HepG2 (cell line): ENCODE measurements at regions of chr19 and their contacts with region 1.

Region 1: GRCh38 chr19:2750808-2751443 is 11.1 kb upstream of the SLC39A3 start:
- DNase-seq: no peak
- ATAC-seq: no peak
- H3K4me3 ChIP-seq: no peak overlapping the region
- H3K27ac ChIP-seq: no peak overlapping the region
- H3K4me1 ChIP-seq: no peaks in the 10 kb centered on the region
- H3K27me3 ChIP-seq: no peaks in the 10 kb centered on the region
- CTCF ChIP-seq: no peak
- EP300 ChIP-seq: no peak
- POLR2A ChIP-seq: no peak
- RAD21 ChIP-seq: no peak

Region 2: DNA sequence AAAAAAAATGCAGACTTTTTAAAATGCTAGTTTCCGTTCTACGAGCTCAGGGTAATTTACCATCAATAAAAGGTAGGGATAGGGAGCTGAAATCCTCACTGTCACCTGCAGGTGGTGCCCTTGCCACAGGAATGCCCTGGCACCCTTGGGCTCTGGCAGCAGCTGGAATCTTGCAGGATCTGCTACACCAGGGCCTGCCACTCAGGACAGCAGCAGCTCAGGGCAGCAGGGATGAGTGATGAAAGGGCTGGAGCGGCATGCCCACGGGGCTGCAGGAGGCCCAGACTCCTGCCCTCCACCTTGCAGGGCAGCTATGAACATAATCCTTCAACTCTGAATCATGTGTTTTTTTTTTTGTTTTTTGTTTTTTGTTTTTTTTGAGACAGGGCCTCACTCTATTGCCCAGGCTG is 102.4 kb before region 1 on chr19:
- CTCF ChIA-PET with region 1: interaction called, 49 read pairs
- POLR2A ChIA-PET with region 1: interaction called, 3 read pairs
- in situ Hi-C with region 1: loop called (anchors 5 kb)
- intact Hi-C with region 1: loop called (anchors 1 kb)
- DNase-seq: peak; percentile 63
- ATAC-seq: peak; percentile 68
- H3K4me3 ChIP-seq: no peak overlapping the region
- H3K27ac ChIP-seq: no peak overlapping the region
- H3K4me1 ChIP-seq: peaks cover 31% of the 10 kb centered on the region
- H3K27me3 ChIP-seq: no peaks in the 10 kb centered on the region
- CTCF ChIP-seq: peak; percentile 96
- EP300 ChIP-seq: no peak
- POLR2A ChIP-seq: no peak
- RAD21 ChIP-seq: peak; percentile 96

Region 3: GRCh38 chr19:2663920-2664571 is 86.9 kb before region 1 on chr19:
- CTCF ChIA-PET with region 1: interaction called, 11 read pairs
- POLR2A ChIA-PET with region 1: no interaction called
- in situ Hi-C with region 1: no loop called
- intact Hi-C with region 1: no loop called
- DNase-seq: no peak
- ATAC-seq: peak; percentile 60
- H3K4me3 ChIP-seq: peak overlapping the region in 1 of 3 experiments; percentile 2; a peak in 1 of 6 replicates
- H3K27ac ChIP-seq: no peak overlapping the region
- H3K4me1 ChIP-seq: peaks cover 13% of the 10 kb centered on the region; the same call in 1 of the 2 replicates
- H3K27me3 ChIP-seq: no peaks in the 10 kb centered on the region
- CTCF ChIP-seq: peak; percentile 51
- EP300 ChIP-seq: no peak
- POLR2A ChIP-seq: no peak
- RAD21 ChIP-seq: peak; percentile 51

Region 4: DNA sequence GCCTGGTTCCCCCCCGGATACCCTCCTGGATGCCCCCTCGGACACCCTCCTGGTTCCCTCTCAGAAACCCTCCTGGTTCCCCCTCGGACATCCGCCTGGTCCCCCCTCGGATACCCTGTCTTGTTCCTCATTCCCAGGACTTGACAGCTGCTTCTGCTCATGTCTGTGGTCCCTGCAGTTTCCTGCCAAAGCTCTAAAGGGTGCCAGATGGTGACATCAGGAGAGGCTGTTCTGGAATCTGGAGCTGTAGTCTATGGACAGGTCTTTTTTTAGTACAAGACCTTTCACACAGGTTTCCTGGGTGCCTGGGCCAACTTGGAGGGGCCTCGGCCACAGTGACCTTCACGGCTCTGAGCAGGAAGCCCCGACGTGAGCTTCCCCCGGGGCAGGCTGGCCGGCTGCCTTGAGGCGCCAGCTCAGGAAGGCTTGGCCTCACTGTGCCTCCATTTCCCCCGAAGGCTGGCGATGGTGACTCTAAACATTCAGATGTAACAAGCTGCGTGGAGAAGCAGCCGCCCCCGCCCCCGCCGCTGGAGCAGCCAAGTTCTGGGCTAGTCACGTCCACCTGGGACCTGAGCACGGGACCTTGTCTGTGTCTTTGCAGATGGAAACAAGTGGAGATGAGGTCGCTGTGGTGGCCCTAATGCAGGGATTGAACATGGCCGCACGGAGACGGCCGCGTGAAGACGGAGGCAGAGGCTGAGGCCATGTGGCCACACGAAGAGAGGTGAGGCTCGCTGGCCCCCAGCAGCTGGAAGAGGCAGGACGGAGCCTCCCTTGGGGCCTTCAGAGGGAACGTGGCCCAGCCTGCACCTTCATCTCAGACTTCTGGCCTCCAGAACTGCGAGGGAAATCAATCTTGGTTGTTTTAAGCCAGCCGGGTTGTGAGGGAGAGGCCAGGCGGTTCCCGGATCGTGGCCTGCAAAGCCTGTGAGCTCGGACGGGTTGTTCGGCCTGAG is 19.4 kb after region 1 on chr19:
- CTCF ChIA-PET with region 1: no interaction called
- POLR2A ChIA-PET with region 1: no interaction called
- in situ Hi-C with region 1: no loop called
- intact Hi-C with region 1: no loop called
- DNase-seq: no peak
- ATAC-seq: no peak
- H3K4me3 ChIP-seq: no peak overlapping the region
- H3K27ac ChIP-seq: no peak overlapping the region
- H3K4me1 ChIP-seq: peaks cover 9% of the 10 kb centered on the region
- H3K27me3 ChIP-seq: no peaks in the 10 kb centered on the region
- CTCF ChIP-seq: no peak
- EP300 ChIP-seq: no peak
- POLR2A ChIP-seq: no peak
- RAD21 ChIP-seq: no peak